Heart right ventricle (tissue), 16 donors: ENCODE measurements at regions of chr18 and their contacts with region 1.

Region 1: DNA sequence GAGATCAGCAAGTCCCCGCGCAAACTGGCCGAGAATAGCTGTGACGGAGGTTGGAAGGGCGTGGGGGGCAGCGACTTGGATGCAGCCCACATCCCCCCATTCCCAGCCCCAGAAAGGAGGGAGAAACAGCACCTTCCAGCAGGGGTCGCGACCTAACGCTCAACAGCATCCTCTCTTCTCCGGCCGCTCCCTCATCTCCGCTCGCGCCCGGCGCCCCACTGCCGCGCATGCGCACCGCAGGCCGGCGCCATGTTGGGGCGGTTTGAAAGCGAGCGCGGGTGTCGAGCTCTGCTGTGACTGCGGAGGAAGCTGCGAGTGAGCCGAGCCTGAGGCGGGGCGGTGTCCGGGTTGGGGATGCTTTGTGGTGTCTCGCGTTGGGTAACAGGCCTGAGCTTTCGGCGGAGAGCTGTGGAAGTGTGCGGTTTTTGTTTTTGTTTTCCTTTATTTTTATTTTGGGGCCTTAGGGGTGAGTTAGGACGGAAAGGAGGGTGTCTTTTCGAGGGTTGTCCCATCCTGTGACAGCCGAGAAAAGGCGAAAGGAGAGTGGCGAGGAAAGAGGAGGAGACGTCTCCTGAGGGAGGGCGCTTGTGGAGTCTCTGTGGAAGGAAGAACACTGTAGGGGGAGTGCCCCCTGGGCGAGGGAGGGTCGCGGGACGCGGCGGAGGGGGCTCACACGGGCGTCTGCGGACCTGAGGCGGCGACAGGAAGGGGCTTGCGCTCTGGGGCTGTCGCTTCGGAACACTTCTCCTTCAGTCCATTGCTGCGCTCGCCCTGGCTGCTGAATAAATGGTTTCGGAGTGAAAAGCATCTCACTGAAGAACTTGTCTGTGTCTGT is at the starts of genes C18orf54 and STARD6:
- DNase-seq: peak; percentile 83 to 87
- ATAC-seq: peak; percentile 97 to 100 (median 99)
- H3K4me3 ChIP-seq: peak within 1 kb of the TSS; percentile 51 to 80 (median 78)
- H3K27ac ChIP-seq: peak within 1 kb of the TSS in 9 of 10 donors; percentile 17 to 84 (median 64)
- H3K4me1 ChIP-seq: peaks cover 0 to 14% (median 8%) of the 10 kb centered on the region in 9 donors
- H3K27me3 ChIP-seq: no peaks in the 10 kb centered on the region
- CTCF ChIP-seq: peak in 8 of 9 donors; percentile 25 to 62 (median 50)
- total RNA-seq, gene C18orf54: 0.55 to 2.9 (median 0.90) TPM
- total RNA-seq, gene STARD6: 0.47 TPM in 1 of 10 donors, not detected in the others

Region 2: DNA sequence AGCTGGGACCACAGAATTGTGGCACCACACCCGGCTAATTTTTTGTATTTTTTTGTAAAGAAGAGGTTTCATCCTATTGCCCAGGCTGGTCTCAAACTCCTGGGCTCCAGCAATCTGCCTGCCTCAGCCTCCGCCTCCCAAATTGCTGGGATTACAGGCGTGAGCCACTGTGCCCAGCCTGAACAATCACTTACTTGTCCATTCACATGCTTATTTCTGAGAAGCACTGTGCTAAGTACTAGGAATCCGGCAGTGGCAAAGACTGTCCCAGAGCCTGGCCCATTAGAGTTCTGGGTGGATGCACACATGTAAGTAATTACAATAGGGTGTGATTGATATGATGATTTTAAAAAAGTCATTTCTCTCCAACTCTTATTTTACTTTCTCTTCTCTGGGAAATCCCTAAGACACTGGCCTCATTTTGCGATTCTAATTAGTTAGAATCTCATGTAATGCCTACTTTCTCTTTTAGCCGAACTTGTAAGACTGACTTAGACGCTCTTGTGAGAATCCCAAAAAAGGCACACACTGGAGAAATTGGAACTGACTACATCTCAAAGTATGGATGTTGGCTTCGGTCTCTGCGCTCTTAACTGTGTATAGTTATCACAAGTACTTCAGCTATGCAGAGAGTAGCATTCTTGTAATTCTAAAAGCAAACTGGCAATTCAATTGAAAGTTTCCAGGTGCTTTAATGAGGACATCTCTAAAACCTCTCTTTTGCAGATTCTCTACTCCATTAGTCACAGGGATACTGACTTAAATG is 1450.2 kb before region 1 on chr18:
- intact Hi-C with region 1: no loop called
- DNase-seq: no peak
- ATAC-seq: no peak
- H3K4me3 ChIP-seq: no peak overlapping the region
- H3K27ac ChIP-seq: no peak overlapping the region
- H3K4me1 ChIP-seq: no peaks in the 10 kb centered on the region
- H3K27me3 ChIP-seq: no peaks in the 10 kb centered on the region
- CTCF ChIP-seq: no peak

Region 3: GRCh38 chr18:54162431-54162830 is 195.4 kb before region 1 on chr18:
- intact Hi-C with region 1: loop called in 1 of 10 experiments (anchors 10 kb)
- DNase-seq: no peak
- ATAC-seq: no peak
- H3K4me3 ChIP-seq: no peak overlapping the region
- H3K27ac ChIP-seq: no peak overlapping the region
- H3K4me1 ChIP-seq: peaks cover 0 to 18% (median 0%) of the 10 kb centered on the region in 9 donors
- H3K27me3 ChIP-seq: no peaks in the 10 kb centered on the region
- CTCF ChIP-seq: no peak

Region 4: DNA sequence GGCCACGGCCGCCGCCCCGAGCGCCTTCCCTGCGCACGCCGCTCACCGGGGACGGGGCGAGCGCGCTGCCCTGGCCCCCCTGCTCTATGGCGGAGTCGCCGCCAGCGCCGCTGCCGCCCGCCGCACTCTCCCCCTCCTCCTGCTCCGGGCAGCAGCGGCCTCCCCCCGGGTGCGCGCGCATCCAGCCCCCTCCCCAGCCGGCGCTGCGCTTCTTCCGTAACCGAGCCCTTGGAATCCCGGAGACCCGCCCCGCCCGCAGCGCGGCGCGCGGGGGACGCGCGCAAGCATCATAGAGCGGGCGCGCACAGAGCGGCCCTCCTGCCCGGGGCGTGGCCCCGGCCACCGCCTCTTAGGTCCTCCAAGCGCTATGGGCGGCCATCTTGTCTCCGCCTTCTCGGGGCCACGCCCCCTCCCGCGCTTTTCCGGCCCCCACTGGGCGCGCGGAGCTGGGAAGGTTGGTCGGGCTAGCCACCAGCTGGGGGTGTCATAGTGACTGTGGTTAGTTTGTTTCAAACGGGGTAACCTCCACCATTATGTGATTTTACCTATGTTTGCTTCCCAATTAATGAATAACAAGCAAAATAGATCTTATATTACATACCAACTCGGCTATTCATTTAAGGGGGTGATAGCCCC is 133.4 kb before region 1 on chr18 and contains the start of gene MBD2:
- intact Hi-C with region 1: loop called in 1 of 10 experiments (anchors 10 kb)
- DNase-seq: peak; percentile 94 to 96
- ATAC-seq: peak; percentile 99 to 100 (median 100)
- H3K4me3 ChIP-seq: peak within 1 kb of the TSS; percentile 44 to 82 (median 72)
- H3K27ac ChIP-seq: peak within 1 kb of the TSS; percentile 59 to 87 (median 82)
- H3K4me1 ChIP-seq: peaks cover 0 to 48% (median 34%) of the 10 kb centered on the region in 9 donors
- H3K27me3 ChIP-seq: no peaks in the 10 kb centered on the region
- CTCF ChIP-seq: peak in 6 of 9 donors; percentile 21 to 65 (median 54)
- total RNA-seq, gene MBD2: 37.4 to 61.3 (median 42.6) TPM

Region 5: GRCh38 chr18:54232485-54233227 is 125.2 kb before region 1 on chr18:
- intact Hi-C with region 1: loop called in 2 of 10 experiments (anchors 10 kb)
- DNase-seq: no peak
- ATAC-seq: peak in 5 of 8 donors; percentile 56 to 88 (median 78)
- H3K4me3 ChIP-seq: no peak overlapping the region
- H3K27ac ChIP-seq: peak overlapping the region in 6 of 10 donors; percentile 2 to 67 (median 51)
- H3K4me1 ChIP-seq: peaks cover 0 to 9% (median 0%) of the 10 kb centered on the region in 9 donors
- H3K27me3 ChIP-seq: no peaks in the 10 kb centered on the region
- CTCF ChIP-seq: peak in 1 of 9 donors; percentile 20